ENCODE measurements at regions of chr4 and their contacts with region 1.

Region 1: GRCh38 chr4:88823058-88823919 is 125.7 kb upstream of the NAP1L5 start:
- DNase-seq: no peak
- ATAC-seq: peak; percentile 82
- H3K4me3 Mint-ChIP-seq: peak overlapping the region; percentile 83
- H3K27ac Mint-ChIP-seq: peak overlapping the region; percentile 50
- H3K4me1 Mint-ChIP-seq: peaks cover 14% of the 10 kb centered on the region
- H3K27me3 Mint-ChIP-seq: no peaks in the 10 kb centered on the region
- CTCF ChIP-seq: no peak

Region 2: DNA sequence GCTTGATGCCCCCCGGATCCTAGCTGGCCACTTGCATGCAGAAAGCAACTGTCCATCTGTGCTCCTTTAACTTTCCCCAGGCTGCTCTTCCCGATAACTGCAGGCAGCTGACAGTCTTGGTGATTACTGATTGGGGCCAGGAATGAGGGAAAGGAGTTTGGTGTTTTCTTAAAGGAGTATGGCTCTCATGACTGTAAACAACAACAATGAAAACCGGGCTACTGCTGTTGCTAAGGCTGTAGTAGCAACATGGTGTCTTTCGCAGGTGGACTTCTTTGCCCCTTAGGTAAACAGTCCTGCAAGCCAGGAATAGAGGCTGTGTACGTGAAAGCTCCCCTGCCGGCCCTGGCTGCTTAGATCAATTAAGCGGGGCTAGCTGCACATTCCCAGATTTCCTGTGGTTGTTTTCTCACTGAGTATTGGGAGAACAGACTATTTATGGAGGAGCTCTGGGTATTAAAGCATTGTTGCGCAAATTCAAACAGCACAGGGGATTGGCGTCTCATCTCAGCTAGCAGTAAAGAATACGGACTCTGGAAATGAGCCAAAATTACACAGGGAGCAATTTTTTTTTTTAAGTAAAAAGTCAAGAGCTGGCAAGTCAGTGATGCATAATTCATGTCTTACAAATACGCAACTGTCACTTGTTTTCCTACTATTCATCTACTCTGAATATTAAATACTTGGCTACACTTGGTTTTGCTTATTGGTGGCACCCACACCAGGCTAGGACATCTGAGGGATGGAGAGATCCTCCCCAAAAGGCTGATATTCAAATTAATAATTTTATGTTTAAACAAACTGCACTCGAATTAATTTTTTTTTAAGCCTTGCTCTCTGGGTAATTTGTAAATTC is 64.0 kb before region 1 on chr4:
- CTCF ChIA-PET with region 1: no interaction called
- POLR2A ChIA-PET with region 1: no interaction called
- intact Hi-C with region 1: no loop called
- DNase-seq: no peak
- ATAC-seq: no peak
- H3K4me3 Mint-ChIP-seq: no peak overlapping the region
- H3K27ac Mint-ChIP-seq: no peak overlapping the region
- H3K4me1 Mint-ChIP-seq: no peaks in the 10 kb centered on the region
- H3K27me3 Mint-ChIP-seq: peaks cover 2% of the 10 kb centered on the region
- CTCF ChIP-seq: no peak

Region 3: DNA sequence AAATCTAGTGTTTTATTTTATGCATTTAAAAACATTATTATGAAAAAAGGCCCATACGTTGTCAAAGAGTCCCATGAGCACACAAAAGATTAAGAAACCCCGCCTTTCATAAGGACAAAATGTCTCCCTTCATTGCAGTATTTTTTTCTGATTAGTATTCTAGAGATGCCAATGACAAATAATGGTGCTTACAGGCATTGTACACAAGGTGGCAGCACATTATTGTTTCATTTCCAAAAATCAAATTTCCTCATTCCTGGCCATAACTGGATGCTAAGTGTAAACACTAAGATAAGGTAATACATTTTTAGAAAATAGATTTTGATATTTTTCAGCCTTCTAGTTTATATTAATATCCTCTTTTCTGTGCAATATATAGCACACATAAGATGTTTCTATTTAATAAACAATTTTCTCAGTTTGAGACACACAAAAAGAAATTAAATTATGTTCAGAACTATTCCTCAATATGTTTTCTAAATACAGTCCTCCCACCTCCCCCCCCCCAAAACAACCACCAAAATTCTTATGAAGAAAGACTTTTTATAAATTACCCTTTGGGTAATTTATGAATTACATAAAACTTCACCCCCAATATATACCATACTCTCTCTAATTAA is 335.7 kb after region 1 on chr4:
- CTCF ChIA-PET with region 1: interaction called, 3 read pairs
- POLR2A ChIA-PET with region 1: no interaction called
- intact Hi-C with region 1: loop called (anchors 2 kb)
- DNase-seq: no peak
- ATAC-seq: peak; percentile 56
- H3K4me3 Mint-ChIP-seq: no peak overlapping the region
- H3K27ac Mint-ChIP-seq: no peak overlapping the region
- H3K4me1 Mint-ChIP-seq: no peaks in the 10 kb centered on the region
- H3K27me3 Mint-ChIP-seq: peaks cover 3% of the 10 kb centered on the region
- CTCF ChIP-seq: peak; percentile 55

Region 4: GRCh38 chr4:89184407-89184806 is 361.1 kb after region 1 on chr4:
- CTCF ChIA-PET with region 1: no interaction called
- POLR2A ChIA-PET with region 1: no interaction called
- intact Hi-C with region 1: no loop called
- DNase-seq: no peak
- ATAC-seq: no peak
- H3K4me3 Mint-ChIP-seq: no peak overlapping the region
- H3K27ac Mint-ChIP-seq: no peak overlapping the region
- H3K4me1 Mint-ChIP-seq: no peaks in the 10 kb centered on the region
- H3K27me3 Mint-ChIP-seq: peaks cover 3% of the 10 kb centered on the region
- CTCF ChIP-seq: no peak

Region 5: GRCh38 chr4:89226665-89227574 is 403.6 kb after region 1 on chr4:
- CTCF ChIA-PET with region 1: interaction called, 3 read pairs
- POLR2A ChIA-PET with region 1: no interaction called
- intact Hi-C with region 1: loop called (anchors 2 kb)
- DNase-seq: peak; percentile 25
- ATAC-seq: peak; percentile 85
- H3K4me3 Mint-ChIP-seq: no peak overlapping the region
- H3K27ac Mint-ChIP-seq: no peak overlapping the region
- H3K4me1 Mint-ChIP-seq: peaks cover 4% of the 10 kb centered on the region
- H3K27me3 Mint-ChIP-seq: no peaks in the 10 kb centered on the region
- CTCF ChIP-seq: peak; percentile 20

Region 6: GRCh38 chr4:89904524-89904923 is 1081.2 kb after region 1 on chr4:
- CTCF ChIA-PET with region 1: no interaction called
- POLR2A ChIA-PET with region 1: no interaction called
- intact Hi-C with region 1: loop called (anchors 5 kb)
- DNase-seq: no peak
- ATAC-seq: no peak
- H3K4me3 Mint-ChIP-seq: no peak overlapping the region
- H3K27ac Mint-ChIP-seq: no peak overlapping the region
- H3K4me1 Mint-ChIP-seq: no peaks in the 10 kb centered on the region
- H3K27me3 Mint-ChIP-seq: no peaks in the 10 kb centered on the region
- CTCF ChIP-seq: no peak